ENCODE measurements at regions of chr2 and their contacts with region 1.

Region 1: DNA sequence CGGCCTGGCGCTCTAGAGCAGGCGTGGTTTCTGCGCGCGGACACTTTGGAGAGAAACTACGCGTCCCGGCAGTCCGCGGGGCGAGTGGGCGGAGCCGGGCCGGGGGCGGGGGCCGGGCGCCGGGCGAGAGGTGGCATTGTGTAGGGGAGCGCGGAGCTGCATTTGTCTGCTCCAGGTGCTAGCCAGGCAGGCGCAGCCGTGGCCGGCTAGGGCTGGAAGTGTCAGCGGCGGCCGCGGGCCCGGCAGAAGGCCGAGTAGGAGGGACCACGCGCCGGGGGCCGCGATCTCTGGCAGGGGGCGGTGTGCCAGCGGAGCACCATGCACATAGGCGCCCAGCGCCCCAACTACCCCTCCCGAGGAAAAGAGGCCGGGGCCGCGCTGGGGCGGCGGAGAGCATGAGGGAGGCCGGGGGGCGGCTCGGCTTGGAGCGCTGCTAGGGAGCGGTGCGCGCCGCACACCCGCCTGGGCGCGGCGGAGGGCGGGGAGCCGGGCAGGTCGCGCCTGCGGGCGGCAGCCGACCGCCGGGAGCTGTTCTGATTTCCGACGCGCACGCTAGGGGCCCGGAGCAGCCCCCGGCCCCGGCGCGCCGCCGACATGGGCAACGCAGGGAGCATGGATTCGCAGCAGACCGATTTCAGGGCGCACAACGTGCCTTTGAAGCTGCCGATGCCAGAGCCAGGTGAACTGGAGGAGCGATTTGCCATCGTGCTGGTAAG is at the start of gene FMNL2:
- DNase-seq: peak; percentile 84 to 90 (median 86)
- ATAC-seq: peak; percentile 81 to 96 (median 94)
- H3K4me3 ChIP-seq: peak within 1 kb of the TSS; percentile 73 to 99 (median 94)
- H3K27ac ChIP-seq: peak within 1 kb of the TSS; percentile 63 to 86 (median 79)
- H3K4me1 ChIP-seq: peaks cover 0 to 31% (median 10%) of the 10 kb centered on the region in 12 donors
- H3K27me3 ChIP-seq: no peaks in the 10 kb centered on the region
- CTCF ChIP-seq: peak in 7 of 12 donors; percentile 8 to 46 (median 13)
- POLR2A ChIP-seq: peak in 1 of 2 donors; percentile 74
- total RNA-seq, gene FMNL2: 4.7 to 19.4 (median 5.5) TPM

Region 2: GRCh38 chr2:152189622-152190495 is 145.3 kb before region 1 on chr2:
- intact Hi-C with region 1: loop called in 4 of 10 experiments (anchors 2 to 10 kb)
- DNase-seq: peak in 3 of 5 donors; percentile 28 to 36 (median 35)
- ATAC-seq: peak; percentile 42 to 85 (median 71)
- H3K4me3 ChIP-seq: no peak overlapping the region
- H3K27ac ChIP-seq: no peak overlapping the region
- H3K4me1 ChIP-seq: no peaks in the 10 kb centered on the region
- H3K27me3 ChIP-seq: no peaks in the 10 kb centered on the region
- CTCF ChIP-seq: peak; percentile 68 to 89 (median 86)
- POLR2A ChIP-seq: no peak

Region 3: GRCh38 chr2:152421521-152422370 is 86.6 kb after region 1 on chr2:
- intact Hi-C with region 1: loop called in 2 of 10 experiments (anchors 5 kb)
- DNase-seq: peak in 3 of 5 donors; percentile 33 to 37 (median 35)
- ATAC-seq: peak; percentile 80 to 97 (median 95)
- H3K4me3 ChIP-seq: no peak overlapping the region
- H3K27ac ChIP-seq: peak overlapping the region in 11 of 12 donors; percentile 6 to 88 (median 49)
- H3K4me1 ChIP-seq: peaks cover 3 to 50% (median 12%) of the 10 kb centered on the region in 12 donors
- H3K27me3 ChIP-seq: no peaks in the 10 kb centered on the region
- CTCF ChIP-seq: no peak
- POLR2A ChIP-seq: no peak

Region 4: GRCh38 chr2:152497481-152498052 is 162.4 kb after region 1 on chr2:
- intact Hi-C with region 1: loop called in 1 of 10 experiments (anchors 10 kb)
- DNase-seq: peak in 2 of 5 donors; percentile 24 to 34
- ATAC-seq: no peak
- H3K4me3 ChIP-seq: peak overlapping the region in 1 of 12 donors; percentile 16
- H3K27ac ChIP-seq: peak overlapping the region in 3 of 12 donors; percentile 3 to 93 (median 18)
- H3K4me1 ChIP-seq: peaks cover 0 to 71% (median 20%) of the 10 kb centered on the region in 12 donors
- H3K27me3 ChIP-seq: no peaks in the 10 kb centered on the region
- CTCF ChIP-seq: no peak
- POLR2A ChIP-seq: no peak

Region 5: DNA sequence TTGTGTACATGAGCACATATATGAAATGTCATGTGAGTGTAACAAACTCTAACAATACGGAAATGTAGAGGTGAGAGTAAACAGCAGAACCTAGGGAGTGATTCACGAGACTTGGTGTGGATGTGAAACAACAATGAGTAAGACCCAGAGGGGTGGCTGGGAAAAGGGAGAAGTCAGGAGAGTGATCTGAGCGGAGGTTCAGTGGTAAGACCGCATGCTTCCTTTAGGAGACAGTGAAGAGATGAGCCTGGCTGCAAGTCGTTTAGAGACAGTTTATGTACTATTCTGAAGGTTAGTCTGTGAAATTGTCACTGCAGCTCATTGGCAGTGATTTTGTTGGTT is 231.5 kb after region 1 on chr2:
- intact Hi-C with region 1: loop called in 1 of 10 experiments (anchors 10 kb)
- DNase-seq: no peak
- ATAC-seq: peak in 1 of 4 donors; percentile 32
- H3K4me3 ChIP-seq: no peak overlapping the region
- H3K27ac ChIP-seq: no peak overlapping the region
- H3K4me1 ChIP-seq: peaks cover 0 to 17% (median 4%) of the 10 kb centered on the region in 12 donors
- H3K27me3 ChIP-seq: no peaks in the 10 kb centered on the region
- CTCF ChIP-seq: no peak
- POLR2A ChIP-seq: no peak

Region 6: DNA sequence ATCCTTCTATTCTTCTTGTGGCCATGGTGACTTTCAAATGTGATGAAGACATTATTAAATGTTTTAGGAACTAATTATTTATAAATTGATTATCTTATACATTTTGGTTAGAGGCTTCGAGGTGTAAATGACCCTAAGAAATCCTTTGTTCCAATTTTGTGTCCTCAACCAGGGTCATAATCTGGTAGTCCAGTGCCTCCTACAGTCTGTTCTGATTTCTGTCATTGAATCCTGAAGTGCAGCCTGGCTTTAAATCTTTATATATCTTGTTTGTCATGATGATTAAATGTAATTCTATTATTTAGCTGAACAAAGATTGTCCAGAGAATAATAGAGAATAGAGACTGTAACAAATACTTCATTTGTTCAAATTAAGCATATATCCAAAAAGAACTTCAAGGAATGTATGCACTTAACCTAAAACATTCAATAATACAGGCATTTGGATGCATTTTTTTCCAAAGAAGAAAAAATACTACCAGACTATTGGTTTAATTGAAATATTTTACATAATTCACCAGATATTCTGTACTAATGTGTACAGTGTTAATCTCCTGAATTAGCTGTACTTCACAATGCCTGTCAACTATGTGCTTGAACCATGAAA is 292.3 kb after region 1 on chr2:
- intact Hi-C with region 1: loop called in 4 of 10 experiments (anchors 5 to 10 kb)
- DNase-seq: no peak
- ATAC-seq: peak in 3 of 4 donors; percentile 57 to 71 (median 68)
- H3K4me3 ChIP-seq: no peak overlapping the region
- H3K27ac ChIP-seq: no peak overlapping the region
- H3K4me1 ChIP-seq: peaks cover 0 to 4% (median 0%) of the 10 kb centered on the region in 12 donors
- H3K27me3 ChIP-seq: no peaks in the 10 kb centered on the region
- CTCF ChIP-seq: peak; percentile 41 to 75 (median 62)
- POLR2A ChIP-seq: no peak

Measured in heart left ventricle (tissue), 16 donors.